ENCODE measurements at regions of chr3 and their contacts with region 1.

Region 1: DNA sequence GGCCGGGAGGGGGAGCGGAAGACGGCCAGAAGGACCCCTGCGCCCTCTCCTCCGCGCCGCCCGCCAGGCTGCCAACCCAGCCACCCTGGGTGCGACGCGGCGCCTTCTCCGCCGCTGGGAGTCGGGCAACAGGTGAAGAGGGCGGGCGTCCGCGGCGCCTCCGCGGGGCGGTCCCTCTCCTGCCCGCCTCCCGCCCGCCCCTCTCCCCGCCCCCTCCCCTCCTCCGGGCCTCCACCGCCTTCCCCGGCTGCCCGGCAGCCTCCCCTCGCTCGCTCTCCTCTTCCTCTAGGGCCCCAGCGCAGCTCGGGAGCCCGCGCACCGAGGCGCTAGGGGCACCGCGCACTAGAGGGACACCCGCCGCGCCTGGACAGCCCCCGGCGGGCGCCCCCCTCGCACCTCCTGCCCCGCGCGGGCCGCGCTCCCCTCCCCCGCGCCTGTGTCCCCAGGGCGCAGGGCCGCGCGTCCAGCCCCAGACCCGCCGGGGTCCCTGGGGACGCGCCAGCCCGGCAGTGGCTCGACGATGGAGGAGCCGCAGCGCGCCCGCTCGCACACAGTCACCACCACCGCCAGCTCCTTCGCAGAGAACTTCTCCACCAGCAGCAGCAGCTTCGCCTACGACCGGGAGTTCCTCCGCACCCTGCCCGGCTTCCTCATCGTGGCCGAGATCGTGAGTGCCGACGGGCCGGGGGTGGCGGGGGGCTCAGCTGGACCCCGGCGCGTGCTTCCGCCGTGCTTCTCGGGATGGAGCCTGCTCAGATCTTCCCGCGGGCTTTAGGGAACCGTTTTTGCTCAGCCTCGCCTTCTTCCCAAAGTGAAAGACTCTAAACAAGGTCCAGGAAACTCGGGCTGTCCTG is at the start of gene CMTM8:
- DNase-seq: peak; percentile 59
- ATAC-seq: peak; percentile 91
- total RNA-seq, gene CMTM8: 4.4 TPM

Region 2: GRCh38 chr3:32200490-32200889 is 38.2 kb before region 1 on chr3:
- intact Hi-C with region 1: loop called (anchors 5 kb)
- DNase-seq: peak; percentile 82
- ATAC-seq: peak; percentile 88